MCF 10A (cell line): ENCODE measurements at regions of chr7 and their contacts with region 1.

Region 1: GRCh38 chr7:77409739-77410547 is 6.2 kb downstream of the GSAP start:
- DNase-seq: peak; percentile 94
- H3K4me3 Mint-ChIP-seq: peak overlapping the region; percentile 12
- H3K27ac Mint-ChIP-seq: peak overlapping the region; percentile 93
- H3K4me1 Mint-ChIP-seq: peaks cover 11% of the 10 kb centered on the region
- H3K27me3 Mint-ChIP-seq: no peaks in the 10 kb centered on the region
- CTCF ChIP-seq: no peak

Region 2: GRCh38 chr7:77396894-77397547 is 12.9 kb before region 1 on chr7:
- CTCF ChIA-PET with region 1: interaction called, 5 read pairs
- POLR2A ChIA-PET with region 1: interaction called, 13 read pairs
- intact Hi-C with region 1: no loop called
- DNase-seq: no peak
- H3K4me3 Mint-ChIP-seq: no peak overlapping the region
- H3K27ac Mint-ChIP-seq: no peak overlapping the region
- H3K4me1 Mint-ChIP-seq: peaks cover 18% of the 10 kb centered on the region
- H3K27me3 Mint-ChIP-seq: no peaks in the 10 kb centered on the region
- CTCF ChIP-seq: no peak